ENCODE measurements at regions of chr3 and their contacts with region 1.

Region 1: DNA sequence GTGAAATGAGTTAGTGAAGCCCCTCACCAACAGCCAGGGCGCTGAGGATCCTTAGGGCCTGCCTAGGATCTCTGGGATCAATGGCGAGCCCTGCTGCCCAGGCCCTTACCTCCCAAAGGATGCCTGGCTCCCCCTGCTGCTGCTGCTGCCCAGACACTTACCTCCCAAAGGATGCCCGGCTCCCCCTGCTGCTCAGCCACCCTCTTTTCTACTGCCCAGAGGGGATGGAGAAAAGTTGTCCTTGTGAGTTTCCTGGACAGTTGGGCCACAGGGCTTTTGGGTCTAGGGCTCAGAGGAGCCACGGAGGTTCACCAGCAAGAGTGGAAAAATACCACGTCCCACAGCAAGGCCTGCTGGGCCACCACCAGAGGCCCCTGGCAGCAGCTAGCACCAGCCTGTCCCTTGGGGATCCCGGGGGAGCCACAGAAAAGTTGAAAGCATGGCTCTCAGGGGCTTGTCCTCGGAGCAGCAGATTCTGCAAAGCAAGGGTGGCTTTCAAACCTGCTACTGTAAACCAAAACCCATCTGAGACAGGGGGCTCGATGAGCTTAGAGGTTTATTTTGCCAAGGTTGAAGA is 59.4 kb downstream of the SLC6A6 start:
- DNase-seq: peak; percentile 71 to 79
- ATAC-seq: peak; percentile 75 to 82
- H3K4me3 ChIP-seq: no peak overlapping the region
- H3K27ac ChIP-seq: peak overlapping the region; percentile 21 to 61; a peak in 3 of 6 replicates
- H3K4me1 ChIP-seq: peaks cover 44% of the 10 kb centered on the region
- CTCF ChIP-seq: peak; percentile 62
- EP300 ChIP-seq: no peak
- POLR2A ChIP-seq: no peak
- RAD21 ChIP-seq: peak; percentile 82

Region 2: GRCh38 chr3:14410503-14411165 is 51.2 kb before region 1 on chr3:
- CTCF ChIA-PET with region 1: interaction called, 11 read pairs
- POLR2A ChIA-PET with region 1: no interaction called
- DNase-seq: peak; percentile 87 to 98
- ATAC-seq: peak; percentile 82 to 85
- H3K4me3 ChIP-seq: no peak overlapping the region
- H3K27ac ChIP-seq: peak overlapping the region; percentile 92 to 98
- H3K4me1 ChIP-seq: peaks cover 99% of the 10 kb centered on the region
- CTCF ChIP-seq: no peak
- EP300 ChIP-seq: peak; percentile 60 to 80; a peak in 3 of 5 replicates
- POLR2A ChIP-seq: no peak
- RAD21 ChIP-seq: no peak

Region 3: GRCh38 chr3:14426063-14426620 is 35.7 kb before region 1 on chr3:
- CTCF ChIA-PET with region 1: interaction called, 13 read pairs
- POLR2A ChIA-PET with region 1: no interaction called
- DNase-seq: no peak
- ATAC-seq: no peak
- H3K4me3 ChIP-seq: no peak overlapping the region
- H3K27ac ChIP-seq: peak overlapping the region in 1 of 2 experiments; percentile 67; a peak in 2 of 6 replicates
- H3K4me1 ChIP-seq: peaks cover 75% of the 10 kb centered on the region
- CTCF ChIP-seq: no peak
- EP300 ChIP-seq: no peak
- POLR2A ChIP-seq: no peak
- RAD21 ChIP-seq: no peak